CD8-positive, alpha-beta T cell (primary cell): ENCODE measurements at regions of chr15 and their contacts with region 1.

Region 1: DNA sequence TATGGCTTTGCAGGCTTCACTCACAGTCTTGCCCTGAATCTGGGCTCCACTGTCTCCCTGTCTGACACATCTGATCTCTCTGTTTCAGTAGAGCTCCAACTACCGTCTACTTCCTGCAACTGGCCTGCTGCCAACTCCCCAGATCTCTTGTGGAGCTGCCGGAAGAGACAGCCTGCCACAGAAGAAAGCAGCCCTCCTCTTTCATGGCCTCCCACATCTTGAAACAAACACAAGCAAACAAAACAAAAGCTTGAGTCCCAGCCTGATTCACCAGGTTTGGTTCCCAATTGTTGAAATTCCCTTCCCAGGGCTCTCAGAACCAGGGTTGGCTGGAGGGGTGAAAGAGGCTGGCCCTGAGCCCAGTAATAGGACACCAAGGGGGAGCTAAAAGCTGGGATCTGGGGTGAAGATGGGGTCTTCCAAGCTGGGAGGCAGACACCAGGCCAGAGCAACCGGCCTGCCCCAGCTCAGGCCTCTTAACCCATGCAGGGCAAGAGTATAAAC is 55.3 kb upstream of the CA12 start:
- DNase-seq: peak; percentile 48 to 90 (median 80)
- ATAC-seq: peak; percentile 84
- H3K4me3 ChIP-seq: peak overlapping the region in 1 of 2 experiments; percentile 15
- H3K4me3 Mint-ChIP-seq: peak overlapping the region; percentile 50
- H3K27ac ChIP-seq: peak overlapping the region; percentile 22 to 63
- H3K27ac Mint-ChIP-seq: peak overlapping the region; percentile 96
- H3K4me1 ChIP-seq: peaks cover 19% of the 10 kb centered on the region
- H3K4me1 Mint-ChIP-seq: peaks cover 47% of the 10 kb centered on the region
- H3K27me3 ChIP-seq: no peaks in the 10 kb centered on the region
- H3K27me3 Mint-ChIP-seq: no peaks in the 10 kb centered on the region
- CTCF ChIP-seq: no peak

Region 2: GRCh38 chr15:63065262-63066221 is 371.4 kb before region 1 on chr15:
- CTCF ChIA-PET with region 1: no interaction called
- POLR2A ChIA-PET with region 1: no interaction called
- intact Hi-C with region 1: no loop called
- DNase-seq: no peak
- ATAC-seq: no peak
- H3K4me3 ChIP-seq: no peak overlapping the region
- H3K4me3 Mint-ChIP-seq: no peak overlapping the region
- H3K27ac ChIP-seq: no peak overlapping the region
- H3K27ac Mint-ChIP-seq: no peak overlapping the region
- H3K4me1 ChIP-seq: no peaks in the 10 kb centered on the region
- H3K4me1 Mint-ChIP-seq: no peaks in the 10 kb centered on the region
- H3K27me3 ChIP-seq: no peaks in the 10 kb centered on the region
- H3K27me3 Mint-ChIP-seq: no peaks in the 10 kb centered on the region
- CTCF ChIP-seq: no peak

Region 3: DNA sequence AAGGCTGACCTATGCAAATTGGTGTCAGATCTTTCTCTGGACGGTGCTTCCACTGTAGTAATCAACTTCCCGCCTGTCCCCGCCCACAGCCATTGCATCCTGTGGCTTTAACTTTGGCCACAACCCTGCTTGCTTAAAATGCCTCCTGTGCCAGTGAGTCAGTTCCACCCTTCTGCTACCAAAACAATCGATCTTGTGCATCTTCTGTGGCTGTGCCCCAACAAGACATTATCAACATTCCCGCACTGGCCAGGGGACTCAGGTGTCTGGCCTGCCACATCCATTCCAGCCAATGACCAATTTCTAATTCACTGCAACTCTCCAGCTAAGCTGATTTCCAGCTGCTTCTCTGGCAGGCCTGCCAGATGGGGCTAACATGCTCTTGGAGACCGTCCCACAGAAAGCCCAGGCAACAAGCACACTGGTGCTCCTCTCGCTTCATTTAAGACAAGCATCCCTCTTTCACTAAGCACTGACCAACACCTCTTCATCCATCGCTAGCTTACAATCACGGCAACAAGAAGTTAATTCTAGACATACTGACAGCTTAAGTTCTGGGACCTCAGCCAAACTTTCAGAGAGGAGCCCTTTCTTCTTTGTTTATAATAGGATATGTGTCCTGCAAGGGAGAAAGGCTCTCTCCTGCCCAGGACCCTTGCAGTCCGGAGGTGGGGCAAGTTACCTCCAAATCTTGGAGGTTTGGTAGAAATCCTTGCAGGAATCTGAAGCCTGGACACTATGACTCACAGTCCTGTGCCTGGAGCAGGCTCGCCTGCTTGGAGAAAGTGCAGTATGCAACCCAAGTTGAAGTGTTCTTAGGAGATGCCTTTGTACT is 62.0 kb before region 1 on chr15:
- CTCF ChIA-PET with region 1: no interaction called
- POLR2A ChIA-PET with region 1: no interaction called
- intact Hi-C with region 1: no loop called
- DNase-seq: no peak
- ATAC-seq: no peak
- H3K4me3 ChIP-seq: no peak overlapping the region
- H3K4me3 Mint-ChIP-seq: no peak overlapping the region
- H3K27ac ChIP-seq: no peak overlapping the region
- H3K27ac Mint-ChIP-seq: no peak overlapping the region
- H3K4me1 ChIP-seq: no peaks in the 10 kb centered on the region
- H3K4me1 Mint-ChIP-seq: no peaks in the 10 kb centered on the region
- H3K27me3 ChIP-seq: no peaks in the 10 kb centered on the region
- H3K27me3 Mint-ChIP-seq: peaks cover 13% of the 10 kb centered on the region
- CTCF ChIP-seq: no peak

Region 4: GRCh38 chr15:63447017-63447676 is 10.2 kb after region 1 on chr15:
- CTCF ChIA-PET with region 1: interaction called, 4 read pairs
- POLR2A ChIA-PET with region 1: interaction called, 12 read pairs
- intact Hi-C with region 1: no loop called
- DNase-seq: no peak
- ATAC-seq: no peak
- H3K4me3 ChIP-seq: no peak overlapping the region
- H3K4me3 Mint-ChIP-seq: no peak overlapping the region
- H3K27ac ChIP-seq: peak overlapping the region; percentile 42 to 58
- H3K27ac Mint-ChIP-seq: peak overlapping the region; percentile 90
- H3K4me1 ChIP-seq: peaks cover 35% of the 10 kb centered on the region
- H3K4me1 Mint-ChIP-seq: peaks cover 31% of the 10 kb centered on the region
- H3K27me3 ChIP-seq: no peaks in the 10 kb centered on the region
- H3K27me3 Mint-ChIP-seq: no peaks in the 10 kb centered on the region
- CTCF ChIP-seq: no peak